MCF 10A (cell line): ENCODE measurements at regions of chr1 and their contacts with region 1.

Region 1: GRCh38 chr1:153520230-153520629 is 15.6 kb downstream of the S100A6 start:
- DNase-seq: no peak
- H3K4me3 Mint-ChIP-seq: no peak overlapping the region
- H3K27ac Mint-ChIP-seq: peak overlapping the region; percentile 37
- H3K4me1 Mint-ChIP-seq: peaks cover 28% of the 10 kb centered on the region
- H3K27me3 Mint-ChIP-seq: no peaks in the 10 kb centered on the region
- CTCF ChIP-seq: no peak

Region 2: DNA sequence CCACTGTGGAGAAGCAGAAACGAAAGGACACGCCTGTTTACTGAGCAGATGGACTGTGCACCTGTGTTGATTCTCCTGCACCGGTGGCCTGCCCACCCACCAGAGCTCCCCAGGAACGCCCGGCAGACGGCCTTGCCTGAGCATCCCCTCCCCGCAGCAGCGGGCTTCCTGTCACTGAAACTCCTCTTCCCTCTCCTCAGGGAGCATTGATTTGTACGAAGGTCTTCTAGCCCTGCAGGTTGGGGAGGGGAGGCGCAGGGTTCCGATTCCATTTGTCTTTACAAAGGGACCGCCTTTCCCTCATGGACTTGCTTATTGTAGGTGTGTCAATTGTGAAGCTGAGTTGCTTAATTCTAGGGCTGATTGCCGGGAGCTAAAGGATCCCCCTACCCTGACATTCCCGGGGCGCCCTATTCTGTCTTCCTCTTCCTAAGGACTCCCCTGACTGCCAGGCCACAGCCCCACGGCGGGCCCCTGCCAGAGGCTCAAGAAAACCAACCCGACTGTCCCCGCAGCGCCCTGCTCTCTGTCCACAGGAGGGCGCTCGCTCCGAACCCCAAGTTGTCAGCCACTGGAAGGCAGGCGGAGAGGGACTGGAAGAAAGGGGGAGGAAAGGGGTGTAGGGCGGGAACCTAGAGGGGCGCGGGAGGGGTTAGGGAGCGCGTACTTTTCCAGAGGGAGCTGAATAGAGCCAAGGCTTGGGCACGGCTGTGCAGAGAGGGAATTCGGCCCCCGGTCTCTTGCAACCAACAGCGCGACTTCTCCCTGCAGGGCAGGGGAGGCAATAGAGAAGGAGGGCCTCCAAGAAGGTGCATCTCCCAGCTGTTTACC is 12.8 kb after region 1 on chr1:
- CTCF ChIA-PET with region 1: interaction called, 30 read pairs
- POLR2A ChIA-PET with region 1: interaction called, 780 read pairs
- intact Hi-C with region 1: no loop called
- DNase-seq: peak; percentile 97
- H3K4me3 Mint-ChIP-seq: peak overlapping the region; percentile 99
- H3K27ac Mint-ChIP-seq: peak overlapping the region; percentile 75
- H3K4me1 Mint-ChIP-seq: peaks cover 47% of the 10 kb centered on the region
- H3K27me3 Mint-ChIP-seq: no peaks in the 10 kb centered on the region
- CTCF ChIP-seq: peak; percentile 93